ENCODE measurements at regions of chr17 and their contacts with region 1.

Region 1: GRCh38 chr17:34420254-34420766 is 57.3 kb upstream of the CCL1 start:
- DNase-seq: peak; percentile 73
- H3K4me3 ChIP-seq: no peak overlapping the region
- H3K27ac ChIP-seq: no peak overlapping the region
- H3K4me1 ChIP-seq: peaks cover 0 to 15% (median 5%) of the 10 kb centered on the region in 4 donors
- H3K27me3 ChIP-seq: peaks cover 10 to 67% (median 38%) of the 10 kb centered on the region in 3 donors
- CTCF ChIP-seq: peak; percentile 38 to 95 (median 84)
- EP300 ChIP-seq: no peak
- POLR2A ChIP-seq: no peak

Region 2: GRCh38 chr17:34306466-34306865 is 113.8 kb before region 1 on chr17:
- intact Hi-C with region 1: no loop called
- DNase-seq: no peak
- H3K4me3 ChIP-seq: no peak overlapping the region
- H3K27ac ChIP-seq: no peak overlapping the region
- H3K4me1 ChIP-seq: peaks cover 0 to 22% (median 15%) of the 10 kb centered on the region in 4 donors
- H3K27me3 ChIP-seq: no peaks in the 10 kb centered on the region
- CTCF ChIP-seq: peak in 3 of 4 experiments; percentile 13 to 52 (median 40)
- EP300 ChIP-seq: no peak
- POLR2A ChIP-seq: no peak

Region 3: DNA sequence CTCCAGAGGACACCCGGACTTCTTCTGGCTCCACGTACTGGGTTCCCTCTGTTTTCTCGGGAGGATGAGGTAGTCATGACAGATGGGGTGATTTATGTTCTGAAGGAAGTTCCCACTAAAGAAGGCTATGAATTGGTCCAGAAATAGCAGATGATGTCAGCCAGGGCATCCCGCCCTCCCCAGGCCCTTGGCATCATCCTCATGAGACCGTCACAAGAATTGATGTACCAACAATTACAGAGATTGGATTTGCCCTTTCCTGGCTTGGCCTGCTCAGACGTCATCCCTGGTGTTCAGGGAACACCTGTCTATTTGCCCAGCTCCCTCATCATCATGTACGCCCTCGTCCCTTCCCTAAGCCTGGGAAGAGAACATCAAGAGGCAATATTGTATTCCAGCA is 45.5 kb after region 1 on chr17:
- intact Hi-C with region 1: no loop called
- DNase-seq: peak; percentile 26
- H3K4me3 ChIP-seq: no peak overlapping the region
- H3K27ac ChIP-seq: no peak overlapping the region
- H3K4me1 ChIP-seq: no peaks in the 10 kb centered on the region
- H3K27me3 ChIP-seq: peaks cover 0 to 12% (median 0%) of the 10 kb centered on the region in 3 donors
- CTCF ChIP-seq: no peak
- EP300 ChIP-seq: no peak
- POLR2A ChIP-seq: no peak

Region 4: DNA sequence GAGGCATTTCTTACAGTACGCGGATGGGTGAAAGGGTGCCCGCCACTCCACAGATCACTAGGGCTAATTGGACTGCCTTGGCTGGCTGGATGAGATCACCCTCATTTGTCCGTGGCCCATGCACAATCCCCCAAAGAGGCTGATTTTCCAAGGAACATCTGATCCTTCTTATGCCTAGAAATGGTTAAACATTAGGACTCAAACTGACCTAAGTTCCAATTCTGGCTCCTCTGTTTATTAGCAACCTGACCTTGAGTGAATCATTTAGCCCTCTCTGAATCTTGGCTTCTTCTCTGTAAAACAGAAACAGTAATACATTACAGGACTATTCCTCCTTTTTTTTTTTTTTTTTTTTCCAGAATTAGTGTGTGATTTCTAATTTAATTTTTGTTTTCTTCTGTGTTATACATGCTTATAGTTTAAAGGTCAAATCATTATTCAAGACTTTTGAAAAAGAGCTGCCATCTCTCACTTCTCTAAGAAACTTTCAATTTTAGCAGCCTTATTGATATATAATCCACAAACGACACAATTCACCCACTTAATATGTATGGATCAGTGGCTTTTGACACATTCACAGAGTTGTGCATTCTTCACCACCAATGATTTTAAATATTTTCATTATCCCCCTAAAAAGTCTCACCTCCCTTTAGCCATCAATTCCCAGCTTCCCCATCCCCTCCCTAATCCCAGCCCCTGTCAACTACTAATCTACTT is 113.7 kb after region 1 on chr17:
- intact Hi-C with region 1: loop called (anchors 10 kb)
- DNase-seq: no peak
- H3K4me3 ChIP-seq: no peak overlapping the region
- H3K27ac ChIP-seq: no peak overlapping the region
- H3K4me1 ChIP-seq: no peaks in the 10 kb centered on the region
- H3K27me3 ChIP-seq: peaks cover 0 to 44% (median 0%) of the 10 kb centered on the region in 3 donors
- CTCF ChIP-seq: no peak
- EP300 ChIP-seq: no peak
- POLR2A ChIP-seq: no peak

Region 5: DNA sequence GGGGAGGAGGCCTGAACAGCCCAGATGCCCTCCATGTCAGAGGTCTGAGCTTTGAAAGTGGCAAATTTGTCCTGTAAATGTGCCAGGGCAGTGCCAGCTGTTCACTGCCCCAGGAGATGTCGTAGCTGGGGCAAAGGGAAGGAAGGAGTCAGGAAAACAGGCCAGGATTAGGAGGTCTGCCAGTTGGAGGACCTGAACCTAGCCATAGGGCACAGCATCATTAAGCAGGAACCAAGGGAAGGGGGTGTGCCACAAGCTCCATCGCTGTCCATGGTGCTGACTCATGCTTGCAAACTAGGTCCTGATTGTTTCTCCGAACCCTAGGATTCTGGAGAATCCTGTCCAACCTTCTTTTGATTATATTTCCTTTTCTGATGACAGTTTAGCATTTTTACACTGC is 283.2 kb after region 1 on chr17:
- intact Hi-C with region 1: no loop called
- DNase-seq: no peak
- H3K4me3 ChIP-seq: no peak overlapping the region
- H3K27ac ChIP-seq: no peak overlapping the region
- H3K4me1 ChIP-seq: no peaks in the 10 kb centered on the region
- H3K27me3 ChIP-seq: peaks cover 0 to 15% (median 0%) of the 10 kb centered on the region in 3 donors
- CTCF ChIP-seq: no peak
- EP300 ChIP-seq: no peak
- POLR2A ChIP-seq: no peak